Activated naive CD4-positive, alpha-beta T cell treated with anti-CD3 and anti-CD28 coated beads for 36 hours (primary cell): ENCODE measurements at regions of chr13 and their contacts with region 1.

Region 1: DNA sequence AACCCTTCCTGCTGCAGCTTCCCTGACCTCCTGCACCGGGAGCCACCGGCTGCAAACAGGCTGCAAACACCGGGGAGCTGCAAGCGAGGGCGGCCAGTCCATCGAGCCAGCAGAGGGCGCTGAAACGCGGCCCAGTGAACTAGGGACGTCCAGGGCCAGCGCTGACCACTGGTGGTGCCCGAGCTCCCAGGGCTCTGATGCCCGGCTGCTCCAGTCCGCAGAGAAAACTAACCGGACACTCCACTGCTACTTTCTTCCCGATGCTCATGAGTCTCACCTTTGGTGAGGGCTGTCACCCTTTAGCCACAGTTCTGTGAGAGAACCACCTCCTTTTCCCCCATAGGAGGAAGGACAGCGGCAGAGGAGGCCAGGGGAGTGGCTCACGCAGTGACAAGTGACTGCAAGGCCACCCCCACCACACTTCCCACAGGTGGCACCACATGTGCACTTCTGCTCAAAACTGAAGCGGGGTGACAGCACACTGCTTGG is 82.8 kb upstream of the MTIF3 start:
- DNase-seq: peak; percentile 61
- H3K4me3 Mint-ChIP-seq: no peak overlapping the region
- H3K27ac Mint-ChIP-seq: no peak overlapping the region
- H3K4me1 Mint-ChIP-seq: peaks cover 8% of the 10 kb centered on the region
- H3K27me3 Mint-ChIP-seq: peaks cover 2% of the 10 kb centered on the region

Region 2: DNA sequence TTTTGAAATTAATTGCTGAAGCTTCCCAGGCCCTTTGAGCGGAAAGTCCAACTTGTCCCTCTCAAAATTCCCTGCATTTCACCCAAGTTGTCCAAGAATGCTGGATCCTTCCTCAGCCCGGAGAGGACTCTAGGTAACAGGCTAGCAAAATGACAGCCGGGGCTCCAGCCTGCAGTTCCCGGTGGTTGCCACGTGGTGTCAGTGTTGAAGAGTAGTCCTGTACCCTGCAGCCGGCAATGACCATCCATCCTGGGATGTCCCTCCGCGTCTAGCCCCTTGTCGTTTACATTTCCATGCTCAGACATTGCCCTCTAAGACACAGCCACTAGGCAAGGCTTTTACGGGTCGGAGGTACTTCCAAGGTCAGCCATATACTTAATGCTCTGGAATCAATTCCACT is 51.4 kb before region 1 on chr13:
- CTCF ChIA-PET with region 1: no interaction called
- intact Hi-C with region 1: loop called (anchors 2 kb)
- DNase-seq: peak; percentile 63
- H3K4me3 Mint-ChIP-seq: no peak overlapping the region
- H3K27ac Mint-ChIP-seq: no peak overlapping the region
- H3K4me1 Mint-ChIP-seq: peaks cover 5% of the 10 kb centered on the region
- H3K27me3 Mint-ChIP-seq: no peaks in the 10 kb centered on the region

Region 3: GRCh38 chr13:27712421-27712820 is 179.2 kb after region 1 on chr13:
- CTCF ChIA-PET with region 1: interaction called, 3 read pairs
- intact Hi-C with region 1: loop called (anchors 5 kb)
- DNase-seq: peak; percentile 18
- H3K4me3 Mint-ChIP-seq: no peak overlapping the region
- H3K27ac Mint-ChIP-seq: no peak overlapping the region
- H3K4me1 Mint-ChIP-seq: no peaks in the 10 kb centered on the region
- H3K27me3 Mint-ChIP-seq: peaks cover 3% of the 10 kb centered on the region

Region 4: DNA sequence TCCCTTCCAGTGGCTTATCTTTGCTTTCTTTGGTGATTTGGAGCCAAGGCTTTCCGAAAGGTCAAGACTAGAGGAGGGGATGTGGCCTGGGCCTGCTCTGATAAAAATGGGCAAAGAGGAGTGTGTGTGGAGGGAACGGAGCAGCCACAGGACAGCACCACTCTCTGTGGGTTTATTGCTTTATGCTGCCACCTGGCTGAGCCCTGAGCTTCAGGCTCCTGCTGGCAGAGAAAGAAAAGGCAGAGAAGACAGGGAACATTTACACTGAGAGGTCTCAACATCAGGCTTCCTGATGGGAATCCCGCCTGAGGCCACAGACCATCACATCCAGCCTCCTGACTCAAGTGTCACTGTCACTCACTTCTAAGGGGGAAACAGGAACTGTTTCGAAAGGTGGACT is 249.9 kb after region 1 on chr13:
- CTCF ChIA-PET with region 1: interaction called, 4 read pairs
- intact Hi-C with region 1: loop called (anchors 2 kb)
- DNase-seq: no peak
- H3K4me3 Mint-ChIP-seq: no peak overlapping the region
- H3K27ac Mint-ChIP-seq: no peak overlapping the region
- H3K4me1 Mint-ChIP-seq: no peaks in the 10 kb centered on the region
- H3K27me3 Mint-ChIP-seq: peaks cover 38% of the 10 kb centered on the region

Region 5: DNA sequence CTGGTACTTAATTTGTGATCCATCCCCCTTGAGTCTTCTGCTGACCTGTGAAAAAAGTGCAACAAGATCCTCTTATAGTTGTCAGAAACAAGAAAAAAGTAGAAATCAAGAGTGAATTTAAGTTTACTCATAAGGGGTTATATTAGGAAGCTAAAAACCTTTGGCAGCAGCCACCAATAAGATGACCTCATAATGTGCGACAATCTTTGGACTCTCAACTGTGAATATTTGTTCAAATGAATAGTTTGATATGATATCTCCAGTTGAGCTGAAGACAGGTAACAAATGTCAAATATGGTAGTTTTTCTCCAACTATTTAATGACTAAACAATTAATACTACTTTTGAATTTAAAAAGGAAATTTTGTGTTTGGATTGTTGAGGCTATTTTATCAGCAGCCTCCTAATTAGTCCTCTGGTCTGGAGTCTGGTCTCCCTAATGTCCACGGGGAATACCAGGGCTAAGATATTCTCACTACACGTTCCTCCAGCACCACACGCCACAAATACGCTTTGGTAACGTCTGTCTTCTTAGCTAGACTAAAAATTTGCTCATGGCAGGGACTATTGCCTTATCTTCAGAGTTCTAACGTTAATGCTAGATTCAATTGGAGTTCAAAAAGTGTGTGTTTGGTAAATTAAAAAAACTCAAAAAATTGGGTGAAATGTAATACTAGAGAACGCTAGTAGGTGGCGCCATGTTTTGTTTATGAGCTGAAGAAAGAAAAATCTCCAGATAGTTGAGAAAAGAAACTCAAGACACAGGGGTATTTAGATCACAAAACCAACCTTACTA is 335.6 kb after region 1 on chr13:
- CTCF ChIA-PET with region 1: no interaction called
- intact Hi-C with region 1: no loop called
- DNase-seq: no peak
- H3K4me3 Mint-ChIP-seq: no peak overlapping the region
- H3K27ac Mint-ChIP-seq: no peak overlapping the region
- H3K4me1 Mint-ChIP-seq: no peaks in the 10 kb centered on the region
- H3K27me3 Mint-ChIP-seq: peaks cover 24% of the 10 kb centered on the region